ENCODE measurements at regions of chr19 and their contacts with region 1.

Region 1: GRCh38 chr19:3586124-3586626 is 897 bp downstream of the GIPC3 start:
- DNase-seq: peak in 23 of 35 experiments; percentile 20 to 63 (median 38)
- ATAC-seq: peak; percentile 58 to 66 (median 62)
- H3K4me3 ChIP-seq: peak overlapping the region; percentile 47 to 80
- H3K4me3 Mint-ChIP-seq: peak overlapping the region; percentile 47 to 59 (median 58)
- H3K27ac ChIP-seq: no peak overlapping the region
- H3K27ac Mint-ChIP-seq: no peak overlapping the region
- H3K4me1 ChIP-seq: peaks cover 3 to 14% of the 10 kb centered on the region in 2 experiments
- H3K4me1 Mint-ChIP-seq: no peaks in the 10 kb centered on the region
- H3K27me3 ChIP-seq: peaks cover 0 to 16% of the 10 kb centered on the region in 2 experiments
- H3K27me3 Mint-ChIP-seq: no peaks in the 10 kb centered on the region

Region 2: DNA sequence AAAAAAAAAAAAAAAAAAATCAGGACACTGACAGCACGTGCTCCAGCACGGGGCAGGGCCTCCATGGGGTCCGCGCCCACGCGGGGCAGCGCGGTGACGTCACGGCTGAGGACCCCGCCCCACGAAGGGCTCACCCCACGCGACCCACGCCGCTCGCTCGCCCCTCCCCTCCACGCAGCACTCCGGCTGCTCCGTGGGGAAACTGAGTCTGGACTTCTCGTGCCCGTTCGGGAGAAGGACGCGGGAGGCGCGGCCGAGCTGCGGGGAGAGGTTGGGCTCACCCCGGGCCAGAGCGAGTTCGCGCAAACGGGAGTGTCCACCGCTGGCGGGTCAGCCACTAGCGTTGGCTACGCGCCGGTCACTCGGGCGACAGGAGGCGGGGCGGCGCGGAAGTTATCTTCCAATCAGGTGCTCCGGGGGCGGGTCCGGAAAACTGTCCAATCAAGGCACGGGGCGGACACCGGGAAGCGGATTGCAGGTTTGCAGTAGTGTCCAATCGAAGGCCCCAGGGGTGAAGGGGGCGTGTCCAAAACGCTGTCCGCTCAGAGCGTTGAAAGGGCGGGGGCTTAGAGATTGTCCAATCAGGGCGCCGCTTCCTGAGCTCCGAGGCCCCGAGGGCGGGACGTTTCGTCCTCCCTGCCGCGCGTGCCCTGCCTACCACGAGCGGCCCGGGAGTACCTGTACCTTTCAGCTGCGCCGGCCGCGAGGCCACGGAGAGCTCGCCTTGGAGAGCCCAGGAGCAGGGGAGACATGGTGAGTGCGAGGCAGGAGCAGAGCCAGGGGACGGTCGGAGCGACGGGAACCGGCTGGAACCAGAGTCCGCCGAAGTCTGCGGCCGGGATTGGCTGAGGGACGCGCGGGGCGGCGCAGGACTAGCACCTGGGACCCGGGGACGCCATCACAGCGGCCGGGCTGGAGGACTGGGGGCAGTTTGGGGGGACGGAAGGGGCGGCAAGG is 685.6 kb before region 1 on chr19 and contains the start of gene ZNF57:
- CTCF ChIA-PET with region 1: no interaction called
- POLR2A ChIA-PET with region 1: interaction called in 1 of 2 experiments, 15 read pairs
- DNase-seq: peak; percentile 90 to 99 (median 96)
- ATAC-seq: peak; percentile 97 to 99 (median 98)
- H3K4me3 ChIP-seq: peak within 1 kb of the TSS; percentile 62 to 89
- H3K4me3 Mint-ChIP-seq: peak within 1 kb of the TSS; percentile 97 to 99 (median 98)
- H3K27ac ChIP-seq: peak within 1 kb of the TSS; percentile 49
- H3K27ac Mint-ChIP-seq: peak within 1 kb of the TSS; percentile 88 to 90
- H3K4me1 ChIP-seq: peaks cover 0 to 21% of the 10 kb centered on the region in 2 experiments
- H3K4me1 Mint-ChIP-seq: peaks cover 19 to 23% (median 22%) of the 10 kb centered on the region in 3 donors
- H3K27me3 ChIP-seq: no peaks in the 10 kb centered on the region
- H3K27me3 Mint-ChIP-seq: no peaks in the 10 kb centered on the region
- total RNA-seq, gene ZNF57: 2.7 to 6.0 (median 3.7) TPM

Region 3: GRCh38 chr19:3614858-3615505 is 28.8 kb after region 1 on chr19:
- CTCF ChIA-PET with region 1: no interaction called
- POLR2A ChIA-PET with region 1: interaction called in 1 of 2 experiments, 10 read pairs
- DNase-seq: no peak
- ATAC-seq: no peak
- H3K4me3 ChIP-seq: no peak overlapping the region
- H3K4me3 Mint-ChIP-seq: no peak overlapping the region
- H3K27ac ChIP-seq: no peak overlapping the region
- H3K27ac Mint-ChIP-seq: no peak overlapping the region
- H3K4me1 ChIP-seq: peaks cover 6 to 11% of the 10 kb centered on the region in 2 experiments
- H3K4me1 Mint-ChIP-seq: peaks cover 9 to 11% (median 11%) of the 10 kb centered on the region in 3 donors
- H3K27me3 ChIP-seq: no peaks in the 10 kb centered on the region
- H3K27me3 Mint-ChIP-seq: no peaks in the 10 kb centered on the region

Measured in T-cell (primary cell).